GM12878 (cell line): ENCODE measurements at regions of chr4 and their contacts with region 1.

Region 1: DNA sequence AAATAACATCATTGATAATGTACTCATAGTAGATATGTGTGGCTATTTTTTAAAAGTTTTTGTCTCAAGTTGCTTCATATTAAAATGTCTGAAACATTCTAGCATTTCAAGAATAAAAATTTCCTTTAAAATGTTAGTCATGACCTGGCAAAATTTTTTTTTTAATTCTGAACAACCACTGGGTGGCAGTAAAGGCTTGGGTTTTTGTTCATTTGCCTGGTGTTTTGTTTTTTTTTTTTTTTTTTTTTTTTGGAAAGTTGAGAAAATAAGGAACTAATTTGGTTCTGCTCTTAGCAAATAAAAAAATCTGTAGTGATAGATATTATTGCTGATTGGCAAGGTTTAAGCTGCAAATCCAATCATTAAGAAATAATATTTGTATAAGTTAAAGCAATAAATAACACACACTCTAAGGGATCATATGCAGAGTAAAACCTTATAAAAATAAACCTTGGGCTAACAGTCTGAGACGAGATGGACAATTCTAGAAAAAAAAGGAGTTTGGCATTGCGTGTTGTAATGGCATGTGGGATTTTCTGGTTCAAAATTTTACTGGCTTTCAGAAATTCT is 81.4 kb downstream of the CEP44 start:
- DNase-seq: no peak
- ATAC-seq: no peak
- H3K4me3 ChIP-seq: no peak overlapping the region
- H3K27ac ChIP-seq: no peak overlapping the region
- H3K4me1 ChIP-seq: no peaks in the 10 kb centered on the region
- H3K27me3 ChIP-seq: no peaks in the 10 kb centered on the region
- CTCF ChIP-seq: peak in 2 of 3 experiments; percentile 24 to 45; a peak in 3 of 6 replicates
- EP300 ChIP-seq: no peak
- POLR2A ChIP-seq: no peak
- RAD21 ChIP-seq: peak; percentile 78

Region 2: DNA sequence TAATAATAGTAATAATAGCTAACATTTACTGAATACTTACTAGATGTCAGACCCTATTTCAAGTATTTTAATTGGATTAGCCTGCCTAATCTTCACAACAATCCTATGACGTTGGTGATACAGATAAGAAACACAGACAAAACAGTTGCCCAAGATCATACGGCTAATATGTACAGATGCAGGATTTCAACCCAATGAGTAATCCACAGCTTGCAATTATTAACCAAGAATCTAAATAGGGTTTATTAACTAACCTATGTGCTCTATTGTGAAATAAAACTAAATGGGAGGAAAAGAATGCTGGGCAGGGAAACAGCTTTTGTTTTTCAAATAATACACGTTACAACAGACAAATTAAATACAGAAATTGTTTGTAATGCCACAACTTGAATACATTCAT is 105.0 kb before region 1 on chr4:
- CTCF ChIA-PET with region 1: no interaction called
- POLR2A ChIA-PET with region 1: no interaction called
- RAD21 ChIA-PET with region 1: no interaction called
- SMC1A ChIA-PET with region 1: no interaction called
- in situ Hi-C with region 1: no loop called
- intact Hi-C with region 1: no loop called
- DNase-seq: no peak
- ATAC-seq: peak; percentile 68
- H3K4me3 ChIP-seq: no peak overlapping the region
- H3K27ac ChIP-seq: no peak overlapping the region
- H3K4me1 ChIP-seq: no peaks in the 10 kb centered on the region
- H3K27me3 ChIP-seq: no peaks in the 10 kb centered on the region
- CTCF ChIP-seq: no peak
- EP300 ChIP-seq: no peak
- POLR2A ChIP-seq: no peak
- RAD21 ChIP-seq: no peak

Region 3: GRCh38 chr4:174423257-174423944 is 58.3 kb after region 1 on chr4:
- CTCF ChIA-PET with region 1: no interaction called
- POLR2A ChIA-PET with region 1: no interaction called
- RAD21 ChIA-PET with region 1: no interaction called
- SMC1A ChIA-PET with region 1: no interaction called
- in situ Hi-C with region 1: no loop called
- intact Hi-C with region 1: no loop called
- DNase-seq: no peak
- ATAC-seq: peak; percentile 66; the same call in 2 of the 3 replicates
- H3K4me3 ChIP-seq: no peak overlapping the region
- H3K27ac ChIP-seq: no peak overlapping the region
- H3K4me1 ChIP-seq: no peaks in the 10 kb centered on the region
- H3K27me3 ChIP-seq: no peaks in the 10 kb centered on the region
- CTCF ChIP-seq: no peak
- EP300 ChIP-seq: no peak
- POLR2A ChIP-seq: no peak
- RAD21 ChIP-seq: no peak

Region 4: DNA sequence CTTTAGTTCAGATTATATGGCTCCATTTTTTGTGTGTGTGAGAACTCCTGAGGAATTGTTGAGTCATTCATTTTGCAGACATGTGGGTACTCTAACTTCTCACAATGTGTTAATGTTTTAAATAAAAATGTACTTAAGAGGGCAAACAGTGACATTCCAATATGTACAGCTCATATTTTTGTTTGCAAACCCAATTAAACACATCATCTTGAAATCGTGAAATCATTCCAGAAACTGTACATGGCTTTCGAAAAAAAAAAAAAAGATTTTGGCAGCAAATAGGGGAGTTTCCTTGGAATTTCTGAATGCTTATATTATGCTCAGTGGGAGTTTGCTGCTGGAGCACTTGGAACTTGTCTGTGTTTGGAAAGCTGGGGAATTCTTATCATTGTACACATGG is 72.2 kb after region 1 on chr4:
- CTCF ChIA-PET with region 1: no interaction called
- POLR2A ChIA-PET with region 1: no interaction called
- RAD21 ChIA-PET with region 1: no interaction called
- SMC1A ChIA-PET with region 1: no interaction called
- in situ Hi-C with region 1: no loop called
- intact Hi-C with region 1: no loop called
- DNase-seq: no peak
- ATAC-seq: no peak
- H3K4me3 ChIP-seq: no peak overlapping the region
- H3K27ac ChIP-seq: no peak overlapping the region
- H3K4me1 ChIP-seq: no peaks in the 10 kb centered on the region
- H3K27me3 ChIP-seq: no peaks in the 10 kb centered on the region
- CTCF ChIP-seq: no peak
- EP300 ChIP-seq: no peak
- POLR2A ChIP-seq: no peak
- RAD21 ChIP-seq: no peak

Region 5: GRCh38 chr4:174714393-174715211 is 349.5 kb after region 1 on chr4:
- CTCF ChIA-PET with region 1: interaction called, 20 read pairs
- POLR2A ChIA-PET with region 1: no interaction called
- RAD21 ChIA-PET with region 1: interaction called, 4 read pairs
- SMC1A ChIA-PET with region 1: interaction called, 3 read pairs
- in situ Hi-C with region 1: no loop called
- intact Hi-C with region 1: loop called (anchors 1 kb)
- DNase-seq: no peak
- ATAC-seq: peak; percentile 90
- H3K4me3 ChIP-seq: no peak overlapping the region
- H3K27ac ChIP-seq: no peak overlapping the region
- H3K4me1 ChIP-seq: no peaks in the 10 kb centered on the region
- H3K27me3 ChIP-seq: 0 out of 4 replicates have a peak, but pooled peaks cover 0 to 4% of the 10 kb centered on the region in 2 experiments
- CTCF ChIP-seq: peak; percentile 74 to 80 (median 75)
- EP300 ChIP-seq: no peak
- POLR2A ChIP-seq: no peak
- RAD21 ChIP-seq: peak; percentile 56

Region 6: GRCh38 chr4:175195877-175196397 is 830.8 kb after region 1 on chr4:
- CTCF ChIA-PET with region 1: no interaction called
- POLR2A ChIA-PET with region 1: no interaction called
- RAD21 ChIA-PET with region 1: no interaction called
- SMC1A ChIA-PET with region 1: no interaction called
- in situ Hi-C with region 1: no loop called
- intact Hi-C with region 1: no loop called
- DNase-seq: no peak
- ATAC-seq: no peak
- H3K4me3 ChIP-seq: no peak overlapping the region
- H3K27ac ChIP-seq: no peak overlapping the region
- H3K4me1 ChIP-seq: no peaks in the 10 kb centered on the region
- H3K27me3 ChIP-seq: no peaks in the 10 kb centered on the region
- CTCF ChIP-seq: no peak
- EP300 ChIP-seq: no peak
- POLR2A ChIP-seq: no peak
- RAD21 ChIP-seq: no peak

Region 7: GRCh38 chr4:175536852-175537453 is 1171.8 kb after region 1 on chr4:
- CTCF ChIA-PET with region 1: no interaction called
- POLR2A ChIA-PET with region 1: no interaction called
- RAD21 ChIA-PET with region 1: no interaction called
- SMC1A ChIA-PET with region 1: no interaction called
- in situ Hi-C with region 1: loop called (anchors 10 kb)
- intact Hi-C with region 1: loop called (anchors 5 kb)
- DNase-seq: peak; percentile 7
- ATAC-seq: peak; percentile 72
- H3K4me3 ChIP-seq: no peak overlapping the region
- H3K27ac ChIP-seq: no peak overlapping the region
- H3K4me1 ChIP-seq: no peaks in the 10 kb centered on the region
- H3K27me3 ChIP-seq: no peaks in the 10 kb centered on the region
- CTCF ChIP-seq: peak; percentile 37 to 48 (median 44); a peak in 5 of 6 replicates
- EP300 ChIP-seq: no peak
- POLR2A ChIP-seq: no peak
- RAD21 ChIP-seq: peak; percentile 56